AG04449 (cell line): ENCODE measurements at regions of chr9 and their contacts with region 1.

Region 1: GRCh38 chr9:122453677-122454135 is 24.0 kb downstream of the OR1J1 start:
- DNase-seq: no peak
- H3K4me3 ChIP-seq: no peak overlapping the region
- CTCF ChIP-seq: no peak

Region 2: DNA sequence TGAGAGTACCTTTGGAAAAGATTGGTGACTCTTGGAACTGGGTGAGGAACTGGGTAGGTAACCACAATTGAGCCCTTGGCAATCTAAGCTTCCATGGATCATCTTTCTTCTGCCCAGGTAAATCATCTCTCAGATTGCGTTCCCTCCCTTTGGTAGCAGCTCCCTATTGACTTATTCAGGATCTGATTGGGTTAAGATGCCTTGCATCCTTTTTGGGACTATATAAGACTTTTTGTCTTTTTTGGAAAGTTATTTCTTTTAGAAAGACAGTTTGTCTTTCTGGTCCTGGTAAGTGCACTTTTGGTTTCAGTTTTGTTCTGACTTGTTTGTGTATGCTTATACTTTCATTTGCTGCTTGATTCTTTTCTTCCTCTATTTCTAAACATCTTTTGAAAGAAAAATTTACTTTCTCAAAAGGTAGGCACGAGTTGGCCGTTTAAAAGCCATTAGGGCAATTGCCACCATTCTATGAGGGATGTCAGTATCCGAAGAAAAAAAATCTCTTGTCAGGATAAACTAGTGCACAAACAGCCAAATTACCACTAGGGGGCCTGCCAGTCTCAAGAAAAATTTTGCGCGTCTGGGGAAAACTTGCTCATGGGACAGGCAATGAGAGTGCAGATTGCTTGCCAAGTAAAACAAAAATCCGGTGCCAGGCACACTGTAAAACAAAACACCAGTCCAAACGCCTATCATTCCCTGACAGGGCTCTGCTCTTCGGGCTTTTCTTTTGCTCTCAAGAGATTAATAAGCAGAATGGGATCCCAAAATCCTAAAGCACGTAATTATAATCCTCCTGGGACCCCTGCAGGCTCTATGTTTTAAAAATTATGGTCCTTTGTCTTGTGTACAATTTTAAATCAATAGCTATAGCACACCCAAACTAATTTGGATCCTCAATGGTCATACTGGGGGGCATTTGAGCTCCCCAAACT is 11.2 kb after region 1 on chr9:
- CTCF ChIA-PET with region 1: interaction called, 33 read pairs
- POLR2A ChIA-PET with region 1: no interaction called
- DNase-seq: peak; percentile 64
- H3K4me3 ChIP-seq: peak overlapping the region; percentile 47
- CTCF ChIP-seq: peak; percentile 66